Mucosa of descending colon (tissue), 3 donors: ENCODE measurements at regions of chr9 and their contacts with region 1.

Region 1: DNA sequence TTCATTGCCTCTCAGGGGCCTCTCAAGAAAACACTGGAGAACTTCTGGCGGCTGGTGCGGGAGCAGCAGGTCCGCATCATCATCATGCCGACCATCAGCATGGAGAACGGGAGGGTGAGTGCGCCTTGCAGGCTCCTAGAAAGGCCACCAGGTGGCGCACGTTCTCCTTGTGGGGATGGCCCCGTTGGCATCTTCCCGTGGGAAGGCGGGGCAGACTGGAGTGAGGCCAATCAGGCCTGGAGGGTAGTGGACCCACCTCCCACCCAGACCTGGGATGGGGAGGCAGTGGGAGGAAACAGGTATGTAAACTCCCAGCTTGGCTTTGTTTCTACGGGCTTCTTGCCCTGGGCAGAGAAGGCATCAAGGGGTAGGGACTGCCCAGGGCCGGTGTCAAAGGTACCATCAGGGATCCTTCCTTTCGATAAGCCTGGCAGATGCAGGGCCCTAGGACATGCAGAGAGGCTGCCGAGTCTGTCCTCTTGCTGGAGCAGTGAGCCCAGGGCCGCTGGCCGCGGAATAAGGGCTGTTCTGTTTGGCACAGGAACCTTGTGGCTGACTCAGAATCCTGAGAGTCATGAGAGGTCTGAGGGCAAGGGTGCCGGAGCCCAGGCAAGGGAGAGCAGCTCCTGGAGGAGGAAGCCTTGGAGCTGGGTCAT is 18.9 kb upstream of the SPTLC1 start:
- DNase-seq: peak; percentile 78 to 85 (median 83)
- ATAC-seq: peak; percentile 94
- H3K4me3 ChIP-seq: no peak overlapping the region
- H3K4me1 ChIP-seq: no peaks in the 10 kb centered on the region
- CTCF ChIP-seq: peak; percentile 94

Region 2: GRCh38 chr9:92242260-92243136 is 108.4 kb after region 1 on chr9:
- intact Hi-C with region 1: loop called in 1 of 2 experiments (anchors 10 kb)
- DNase-seq: no peak
- ATAC-seq: no peak
- H3K4me3 ChIP-seq: no peak overlapping the region
- H3K4me1 ChIP-seq: no peaks in the 10 kb centered on the region
- CTCF ChIP-seq: no peak

Region 3: GRCh38 chr9:92781923-92782322 is 647.8 kb after region 1 on chr9:
- intact Hi-C with region 1: loop called in 1 of 2 experiments (anchors 10 kb)
- DNase-seq: no peak
- ATAC-seq: no peak
- H3K4me3 ChIP-seq: no peak overlapping the region
- H3K4me1 ChIP-seq: no peaks in the 10 kb centered on the region
- CTCF ChIP-seq: no peak